ENCODE measurements at regions of chr16 and their contacts with region 1.

Region 1: GRCh38 chr16:4574919-4575705 is 19.0 kb downstream of the C16orf96 start:
- H3K4me3 ChIP-seq: no peak overlapping the region
- H3K27ac ChIP-seq: no peak overlapping the region
- H3K4me1 ChIP-seq: no peaks in the 10 kb centered on the region
- CTCF ChIP-seq: 0 out of 2 replicates have a peak, but pooled peaks have one; percentile 9

Region 2: GRCh38 chr16:4586291-4586690 is 11.2 kb after region 1 on chr16:
- CTCF ChIA-PET with region 1: interaction called, 16 read pairs
- POLR2A ChIA-PET with region 1: no interaction called
- H3K4me3 ChIP-seq: no peak overlapping the region
- H3K27ac ChIP-seq: no peak overlapping the region
- H3K4me1 ChIP-seq: no peaks in the 10 kb centered on the region
- CTCF ChIP-seq: no peak

Region 3: DNA sequence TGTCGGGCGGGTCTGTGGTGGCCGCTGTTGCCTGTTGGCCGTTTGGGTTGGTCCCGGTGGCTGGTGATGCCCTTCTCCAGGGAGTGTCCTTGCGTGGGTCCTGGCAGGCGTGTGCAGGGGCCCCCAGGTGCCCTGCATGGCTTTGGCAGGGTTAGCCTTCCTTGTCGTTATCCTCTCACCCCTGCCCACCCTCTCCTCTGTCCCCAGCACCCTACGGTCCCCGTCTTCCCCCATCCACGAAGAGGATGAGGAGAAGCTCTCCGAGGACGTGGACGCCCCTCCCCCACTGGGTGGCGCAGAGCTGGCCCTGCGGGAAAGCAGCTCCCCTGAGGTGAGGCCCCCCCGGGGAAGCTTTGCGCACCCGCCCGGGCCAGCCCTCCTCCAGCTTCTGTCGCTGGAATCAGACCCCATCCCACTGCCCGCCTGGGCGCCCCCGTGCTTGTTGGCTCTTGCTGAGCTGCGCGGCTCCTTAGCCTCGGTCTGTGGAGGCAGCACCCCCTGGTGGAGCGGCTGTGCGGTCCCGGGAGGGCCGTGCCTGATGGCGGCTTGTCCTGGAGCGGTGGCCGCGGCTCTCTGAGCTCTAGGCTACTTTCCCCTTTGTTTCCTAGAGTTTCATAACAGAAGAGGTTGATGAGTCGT is 107.6 kb after region 1 on chr16:
- CTCF ChIA-PET with region 1: no interaction called
- POLR2A ChIA-PET with region 1: no interaction called
- H3K4me3 ChIP-seq: no peak overlapping the region
- H3K27ac ChIP-seq: no peak overlapping the region
- H3K4me1 ChIP-seq: no peaks in the 10 kb centered on the region
- CTCF ChIP-seq: no peak